GM12878 (cell line): ENCODE measurements at regions of chr12 and their contacts with region 1.

Region 1: GRCh38 chr12:23204933-23205778 is 580.2 kb downstream of the ETNK1 start:
- DNase-seq: peak; percentile 27
- ATAC-seq: peak; percentile 93
- H3K4me3 ChIP-seq: no peak overlapping the region
- H3K27ac ChIP-seq: no peak overlapping the region
- H3K4me1 ChIP-seq: no peaks in the 10 kb centered on the region
- H3K27me3 ChIP-seq: no peaks in the 10 kb centered on the region
- CTCF ChIP-seq: peak; percentile 83 to 90 (median 90)
- EP300 ChIP-seq: no peak
- POLR2A ChIP-seq: no peak
- RAD21 ChIP-seq: peak; percentile 81

Region 2: DNA sequence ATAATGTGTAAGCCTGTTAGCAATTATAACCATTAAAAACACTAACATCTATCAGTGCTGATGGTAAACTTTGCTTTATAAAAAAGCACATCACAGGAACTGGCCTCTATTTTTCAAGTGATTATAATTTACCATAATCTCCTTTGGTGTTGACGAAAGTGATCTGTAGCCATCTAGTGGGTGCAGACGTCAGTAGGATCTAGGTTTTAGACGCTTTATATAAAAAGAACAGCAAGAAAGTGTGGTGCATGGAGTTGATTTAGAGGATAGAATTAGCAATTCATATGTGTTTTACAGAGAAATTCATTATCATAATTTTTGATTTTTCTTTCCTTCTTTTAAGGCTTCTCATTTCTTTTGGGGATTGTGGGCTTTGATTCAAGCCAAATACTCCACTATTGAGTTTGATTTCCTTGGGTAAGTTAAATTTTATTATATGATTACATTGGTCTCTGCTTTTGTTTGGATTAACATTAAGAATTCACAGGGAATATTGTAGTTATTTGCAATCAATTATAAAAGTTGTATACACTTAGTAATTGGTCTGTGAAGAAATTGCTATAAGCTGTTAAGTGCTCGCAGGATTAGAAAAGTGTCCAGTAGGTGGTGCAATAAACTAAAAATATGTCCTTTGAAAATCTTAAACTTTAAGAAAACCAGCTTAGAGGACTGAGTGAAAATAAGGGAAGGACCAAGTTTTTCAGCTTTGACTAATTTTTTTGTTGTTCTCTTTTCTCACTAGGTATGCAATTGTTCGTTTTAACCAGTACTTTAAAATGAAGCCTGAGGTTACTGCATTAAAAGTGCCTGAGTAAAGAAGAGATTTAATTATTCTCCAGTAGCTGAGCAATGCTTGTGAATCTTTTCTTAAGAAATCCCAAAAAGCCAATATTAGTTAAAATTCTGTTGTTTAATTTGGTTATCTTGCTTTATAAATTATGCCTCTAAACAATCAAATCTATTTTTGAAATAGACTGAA is 520.7 kb before region 1 on chr12:
- CTCF ChIA-PET with region 1: interaction called, 3 read pairs
- POLR2A ChIA-PET with region 1: no interaction called
- RAD21 ChIA-PET with region 1: no interaction called
- SMC1A ChIA-PET with region 1: no interaction called
- in situ Hi-C with region 1: no loop called
- intact Hi-C with region 1: loop called (anchors 10 kb)
- DNase-seq: peak; percentile 11
- ATAC-seq: peak; percentile 64
- H3K4me3 ChIP-seq: no peak overlapping the region
- H3K27ac ChIP-seq: no peak overlapping the region
- H3K4me1 ChIP-seq: peaks cover 18% of the 10 kb centered on the region
- H3K27me3 ChIP-seq: no peaks in the 10 kb centered on the region
- CTCF ChIP-seq: peak; percentile 50 to 61 (median 56); a peak in 4 of 6 replicates
- EP300 ChIP-seq: no peak
- POLR2A ChIP-seq: no peak
- RAD21 ChIP-seq: peak; percentile 63

Region 3: DNA sequence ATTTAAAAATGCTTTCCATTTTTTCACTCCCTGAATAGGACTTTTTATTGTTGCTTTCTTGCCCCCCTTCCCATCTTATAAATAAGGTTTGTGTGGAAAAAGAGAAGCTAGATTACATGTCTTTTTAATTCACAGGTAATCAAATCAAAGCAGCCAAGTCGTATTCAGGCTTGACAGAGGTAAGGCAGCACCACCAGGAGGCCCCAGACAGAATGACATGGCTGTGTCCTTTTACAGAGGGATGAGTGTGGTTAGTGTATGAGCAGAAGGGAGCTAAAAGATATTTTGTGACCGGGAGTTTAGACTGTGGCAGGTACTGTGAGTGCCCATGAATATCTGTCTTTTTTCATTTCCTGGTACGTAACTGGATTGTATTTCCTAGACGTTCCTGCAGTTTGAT is 15.9 kb after region 1 on chr12:
- CTCF ChIA-PET with region 1: interaction called, 19 read pairs
- POLR2A ChIA-PET with region 1: no interaction called
- RAD21 ChIA-PET with region 1: interaction called, 3 read pairs
- SMC1A ChIA-PET with region 1: no interaction called
- in situ Hi-C with region 1: no loop called
- intact Hi-C with region 1: no loop called
- DNase-seq: no peak
- ATAC-seq: peak; percentile 55; the same call in 2 of the 3 replicates
- H3K4me3 ChIP-seq: no peak overlapping the region
- H3K27ac ChIP-seq: no peak overlapping the region
- H3K4me1 ChIP-seq: no peaks in the 10 kb centered on the region
- H3K27me3 ChIP-seq: no peaks in the 10 kb centered on the region
- CTCF ChIP-seq: peak; percentile 7 to 28 (median 19); a peak in 2 of 6 replicates
- EP300 ChIP-seq: no peak
- POLR2A ChIP-seq: no peak
- RAD21 ChIP-seq: no peak

Region 4: GRCh38 chr12:24109381-24110039 is 904.4 kb after region 1 on chr12:
- CTCF ChIA-PET with region 1: interaction called, 4 read pairs
- POLR2A ChIA-PET with region 1: no interaction called
- RAD21 ChIA-PET with region 1: no interaction called
- SMC1A ChIA-PET with region 1: no interaction called
- in situ Hi-C with region 1: no loop called
- intact Hi-C with region 1: loop called (anchors 5 kb)
- DNase-seq: peak; percentile 37
- ATAC-seq: peak; percentile 95
- H3K4me3 ChIP-seq: no peak overlapping the region
- H3K27ac ChIP-seq: no peak overlapping the region
- H3K4me1 ChIP-seq: no peaks in the 10 kb centered on the region
- H3K27me3 ChIP-seq: no peaks in the 10 kb centered on the region
- CTCF ChIP-seq: peak; percentile 47 to 70 (median 59)
- EP300 ChIP-seq: peak; percentile 34 to 51; a peak in 1 of 4 replicates
- POLR2A ChIP-seq: no peak
- RAD21 ChIP-seq: peak; percentile 71

Region 5: GRCh38 chr12:24778486-24779304 is 1573.5 kb after region 1 on chr12:
- CTCF ChIA-PET with region 1: interaction called, 8 read pairs
- POLR2A ChIA-PET with region 1: interaction called, 3 read pairs
- RAD21 ChIA-PET with region 1: no interaction called
- SMC1A ChIA-PET with region 1: interaction called, 4 read pairs
- in situ Hi-C with region 1: loop called (anchors 10 kb)
- intact Hi-C with region 1: loop called (anchors 2 kb)
- DNase-seq: peak; percentile 8
- ATAC-seq: peak; percentile 90
- H3K4me3 ChIP-seq: no peak overlapping the region
- H3K27ac ChIP-seq: no peak overlapping the region
- H3K4me1 ChIP-seq: no peaks in the 10 kb centered on the region
- H3K27me3 ChIP-seq: no peaks in the 10 kb centered on the region
- CTCF ChIP-seq: peak; percentile 37 to 67 (median 43); a peak in 4 of 6 replicates
- EP300 ChIP-seq: no peak
- POLR2A ChIP-seq: no peak
- RAD21 ChIP-seq: peak; percentile 87